HepG2 (cell line): ENCODE measurements at regions of chr20 and their contacts with region 1.

Region 1: GRCh38 chr20:45771182-45771759 is 20.4 kb downstream of the WFDC3 start:
- DNase-seq: peak; percentile 92
- ATAC-seq: peak; percentile 90
- H3K4me3 ChIP-seq: peak overlapping the region in 1 of 3 experiments; percentile 44; a peak in 2 of 6 replicates
- H3K27ac ChIP-seq: no peak overlapping the region
- H3K4me1 ChIP-seq: peaks cover 15% of the 10 kb centered on the region
- H3K27me3 ChIP-seq: peaks cover 2 to 15% of the 10 kb centered on the region in 2 experiments; a peak in 3 of 5 replicates
- CTCF ChIP-seq: peak; percentile 97
- EP300 ChIP-seq: 0 out of 4 replicates have a peak, but pooled peaks of 1 of the 2 experiments have one; percentile 1
- POLR2A ChIP-seq: no peak
- RAD21 ChIP-seq: peak; percentile 99

Region 2: DNA sequence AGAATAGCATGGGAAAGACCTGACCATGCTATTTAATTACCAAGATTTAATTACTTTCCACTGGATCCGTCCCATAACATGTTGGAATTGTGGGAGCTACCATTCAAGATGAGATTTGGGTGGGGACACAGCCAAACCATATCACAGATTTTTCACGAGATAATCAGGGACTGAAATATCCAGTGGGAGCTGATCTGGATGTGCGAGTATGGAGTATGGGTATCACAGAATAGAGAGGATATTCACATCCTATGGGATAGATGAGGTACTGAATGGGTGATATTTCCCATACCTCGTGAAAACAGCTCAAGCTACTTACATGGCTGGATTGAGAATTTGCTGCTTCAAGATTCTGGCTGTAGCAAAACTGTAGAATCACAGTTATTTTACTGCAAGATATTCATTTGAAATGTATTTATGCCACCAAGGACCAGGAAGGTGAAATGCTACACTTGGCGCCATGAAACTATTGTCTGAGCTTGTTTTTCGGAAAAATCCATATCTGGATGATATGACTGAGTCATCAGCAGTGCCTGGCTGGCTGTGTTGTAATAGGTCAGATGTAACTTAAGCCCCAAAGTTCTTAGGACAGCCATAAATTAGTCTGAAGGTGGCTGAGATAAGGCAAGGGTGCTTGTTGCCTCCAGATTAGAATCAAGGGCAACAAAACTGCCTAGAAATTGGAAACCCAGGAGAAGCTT is 700.2 kb before region 1 on chr20:
- CTCF ChIA-PET with region 1: no interaction called
- POLR2A ChIA-PET with region 1: no interaction called
- in situ Hi-C with region 1: no loop called
- intact Hi-C with region 1: no loop called
- DNase-seq: no peak
- ATAC-seq: no peak
- H3K4me3 ChIP-seq: no peak overlapping the region
- H3K27ac ChIP-seq: no peak overlapping the region
- H3K4me1 ChIP-seq: peaks cover 12% of the 10 kb centered on the region
- H3K27me3 ChIP-seq: no peaks in the 10 kb centered on the region
- CTCF ChIP-seq: no peak
- EP300 ChIP-seq: no peak
- POLR2A ChIP-seq: no peak
- RAD21 ChIP-seq: no peak

Region 3: GRCh38 chr20:45362804-45363610 is 408.3 kb before region 1 on chr20 and contains the start of gene SYS1:
- CTCF ChIA-PET with region 1: no interaction called
- POLR2A ChIA-PET with region 1: interaction called, 7 read pairs
- in situ Hi-C with region 1: no loop called
- intact Hi-C with region 1: loop called (anchors 5 kb)
- DNase-seq: peak; percentile 100
- ATAC-seq: peak; percentile 89
- H3K4me3 ChIP-seq: peak within 1 kb of the TSS; percentile 78 to 95 (median 91)
- H3K27ac ChIP-seq: peak within 1 kb of the TSS; percentile 92
- H3K4me1 ChIP-seq: peaks cover 64% of the 10 kb centered on the region
- H3K27me3 ChIP-seq: no peaks in the 10 kb centered on the region; a peak in 2 of 5 replicates
- CTCF ChIP-seq: peak; percentile 99
- EP300 ChIP-seq: peak; percentile 8 to 29; a peak in 3 of 4 replicates
- POLR2A ChIP-seq: peak; percentile 94 to 98
- RAD21 ChIP-seq: peak; percentile 89
- total RNA-seq, gene SYS1: 22.0 and 38.3 TPM in 2 replicates

Region 4: GRCh38 chr20:45456632-45457031 is 314.6 kb before region 1 on chr20:
- CTCF ChIA-PET with region 1: interaction called, 33 read pairs
- POLR2A ChIA-PET with region 1: no interaction called
- in situ Hi-C with region 1: loop called (anchors 5 kb)
- intact Hi-C with region 1: no loop called
- DNase-seq: peak; percentile 70
- ATAC-seq: peak; percentile 89
- H3K4me3 ChIP-seq: no peak overlapping the region
- H3K27ac ChIP-seq: no peak overlapping the region
- H3K4me1 ChIP-seq: no peaks in the 10 kb centered on the region
- H3K27me3 ChIP-seq: no peaks in the 10 kb centered on the region; a peak in 1 of 5 replicates
- CTCF ChIP-seq: peak; percentile 65
- EP300 ChIP-seq: no peak
- POLR2A ChIP-seq: no peak
- RAD21 ChIP-seq: peak; percentile 59

Region 5: GRCh38 chr20:45545754-45546453 is 225.4 kb before region 1 on chr20:
- CTCF ChIA-PET with region 1: interaction called, 23 read pairs
- POLR2A ChIA-PET with region 1: no interaction called
- in situ Hi-C with region 1: loop called (anchors 5 kb)
- intact Hi-C with region 1: loop called (anchors 1 kb)
- DNase-seq: peak; percentile 48
- ATAC-seq: peak; percentile 77
- H3K4me3 ChIP-seq: no peak overlapping the region
- H3K27ac ChIP-seq: no peak overlapping the region
- H3K4me1 ChIP-seq: no peaks in the 10 kb centered on the region
- H3K27me3 ChIP-seq: peaks cover 2 to 19% of the 10 kb centered on the region in 2 experiments; a peak in 3 of 5 replicates
- CTCF ChIP-seq: peak; percentile 67
- EP300 ChIP-seq: no peak
- POLR2A ChIP-seq: no peak
- RAD21 ChIP-seq: peak; percentile 49; the same call in 1 of the 2 replicates

Region 6: GRCh38 chr20:45592574-45593189 is 178.6 kb before region 1 on chr20:
- CTCF ChIA-PET with region 1: interaction called, 95 read pairs
- POLR2A ChIA-PET with region 1: no interaction called
- in situ Hi-C with region 1: loop called (anchors 5 kb)
- intact Hi-C with region 1: loop called (anchors 1 kb)
- DNase-seq: peak; percentile 88
- ATAC-seq: peak; percentile 96
- H3K4me3 ChIP-seq: no peak overlapping the region
- H3K27ac ChIP-seq: no peak overlapping the region
- H3K4me1 ChIP-seq: no peaks in the 10 kb centered on the region
- H3K27me3 ChIP-seq: peaks cover 0 to 10% of the 10 kb centered on the region in 2 experiments; a peak in 1 of 5 replicates
- CTCF ChIP-seq: peak; percentile 78
- EP300 ChIP-seq: no peak
- POLR2A ChIP-seq: no peak
- RAD21 ChIP-seq: peak; percentile 87

Region 7: GRCh38 chr20:45611054-45611453 is 160.2 kb before region 1 on chr20:
- CTCF ChIA-PET with region 1: no interaction called
- POLR2A ChIA-PET with region 1: no interaction called
- in situ Hi-C with region 1: no loop called
- intact Hi-C with region 1: no loop called
- DNase-seq: no peak
- ATAC-seq: no peak
- H3K4me3 ChIP-seq: no peak overlapping the region
- H3K27ac ChIP-seq: no peak overlapping the region
- H3K4me1 ChIP-seq: no peaks in the 10 kb centered on the region
- H3K27me3 ChIP-seq: 0 out of 5 replicates have a peak, but pooled peaks cover 0 to 3% of the 10 kb centered on the region in 2 experiments
- CTCF ChIP-seq: no peak
- EP300 ChIP-seq: no peak
- POLR2A ChIP-seq: no peak
- RAD21 ChIP-seq: no peak